MCF 10A (cell line): ENCODE measurements at regions of chr1 and their contacts with region 1.

Region 1: GRCh38 chr1:214816603-214817002 is 213.6 kb downstream of the CENPF start:
- DNase-seq: no peak
- H3K4me3 Mint-ChIP-seq: no peak overlapping the region
- H3K27ac Mint-ChIP-seq: no peak overlapping the region
- H3K4me1 Mint-ChIP-seq: no peaks in the 10 kb centered on the region
- H3K27me3 Mint-ChIP-seq: no peaks in the 10 kb centered on the region
- CTCF ChIP-seq: no peak

Region 2: DNA sequence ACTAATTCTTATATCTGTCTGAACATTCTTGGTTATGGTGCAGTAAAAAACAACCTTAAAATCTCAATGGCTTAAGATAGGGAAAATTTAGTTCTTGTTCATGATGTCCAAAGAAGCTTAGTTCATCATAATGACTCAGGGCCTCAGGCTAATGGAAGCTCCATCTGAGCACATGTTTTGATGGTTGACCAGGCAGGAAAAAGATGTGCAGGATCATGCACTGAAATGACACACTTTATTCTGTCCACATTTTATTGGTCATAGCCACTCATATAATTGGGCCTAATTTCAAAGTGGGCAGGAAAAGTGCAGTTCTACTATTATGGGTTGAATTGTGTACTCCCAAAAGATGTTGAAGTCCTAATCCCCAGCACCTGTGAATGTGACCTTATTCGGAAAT is 15.4 kb before region 1 on chr1:
- CTCF ChIA-PET with region 1: interaction called, 12 read pairs
- POLR2A ChIA-PET with region 1: no interaction called
- intact Hi-C with region 1: no loop called
- DNase-seq: peak; percentile 29
- H3K4me3 Mint-ChIP-seq: no peak overlapping the region
- H3K27ac Mint-ChIP-seq: no peak overlapping the region
- H3K4me1 Mint-ChIP-seq: peaks cover 8% of the 10 kb centered on the region
- H3K27me3 Mint-ChIP-seq: no peaks in the 10 kb centered on the region
- CTCF ChIP-seq: no peak

Region 3: GRCh38 chr1:214857716-214858115 is 41.1 kb after region 1 on chr1:
- CTCF ChIA-PET with region 1: no interaction called
- POLR2A ChIA-PET with region 1: no interaction called
- intact Hi-C with region 1: no loop called
- DNase-seq: peak; percentile 55
- H3K4me3 Mint-ChIP-seq: no peak overlapping the region
- H3K27ac Mint-ChIP-seq: peak overlapping the region; percentile 15
- H3K4me1 Mint-ChIP-seq: peaks cover 23% of the 10 kb centered on the region
- H3K27me3 Mint-ChIP-seq: no peaks in the 10 kb centered on the region
- CTCF ChIP-seq: no peak